ENCODE measurements at regions of chr7 and their contacts with region 1.

Region 1: GRCh38 chr7:116443101-116443523 is 56.4 kb upstream of the CAV2 start:
- DNase-seq: peak; percentile 91
- H3K4me3 ChIP-seq: no peak overlapping the region
- H3K27ac ChIP-seq: peak overlapping the region; percentile 93
- H3K4me1 ChIP-seq: peaks cover 35% of the 10 kb centered on the region
- H3K27me3 ChIP-seq: no peaks in the 10 kb centered on the region
- CTCF ChIP-seq: no peak
- POLR2A ChIP-seq: peak; percentile 50

Region 2: GRCh38 chr7:116024826-116025809 is 418.0 kb before region 1 on chr7:
- CTCF ChIA-PET with region 1: no interaction called
- POLR2A ChIA-PET with region 1: no interaction called
- dilution Hi-C with region 1: no loop called
- intact Hi-C with region 1: no loop called
- DNase-seq: peak; percentile 66
- H3K4me3 ChIP-seq: no peak overlapping the region
- H3K27ac ChIP-seq: peak overlapping the region; percentile 58
- H3K4me1 ChIP-seq: peaks cover 12% of the 10 kb centered on the region
- H3K27me3 ChIP-seq: no peaks in the 10 kb centered on the region
- CTCF ChIP-seq: no peak
- POLR2A ChIP-seq: no peak

Region 3: GRCh38 chr7:116087291-116087690 is 355.8 kb before region 1 on chr7:
- CTCF ChIA-PET with region 1: no interaction called
- POLR2A ChIA-PET with region 1: no interaction called
- dilution Hi-C with region 1: no loop called
- intact Hi-C with region 1: no loop called
- DNase-seq: no peak
- H3K4me3 ChIP-seq: no peak overlapping the region
- H3K27ac ChIP-seq: no peak overlapping the region
- H3K4me1 ChIP-seq: no peaks in the 10 kb centered on the region
- H3K27me3 ChIP-seq: no peaks in the 10 kb centered on the region
- CTCF ChIP-seq: no peak
- POLR2A ChIP-seq: no peak

Region 4: DNA sequence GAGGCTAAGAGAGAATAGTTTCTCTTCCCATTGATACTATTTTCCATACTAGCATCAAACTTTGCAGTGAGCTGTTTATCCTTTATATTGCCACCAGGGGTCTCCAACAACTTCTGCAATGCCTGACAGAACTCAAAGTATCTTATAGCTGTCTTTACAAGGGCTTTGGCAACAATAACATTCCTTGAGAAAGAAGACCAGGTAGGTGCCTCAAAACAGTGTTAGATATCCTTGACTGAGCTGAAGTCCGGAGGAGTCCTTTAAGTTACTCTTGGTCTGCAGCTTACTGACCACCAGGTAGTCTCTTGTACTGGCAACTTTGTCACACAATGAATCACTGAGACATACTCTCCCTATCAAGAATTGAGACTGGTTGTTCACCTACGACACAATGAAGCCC is 262.8 kb before region 1 on chr7:
- CTCF ChIA-PET with region 1: no interaction called
- POLR2A ChIA-PET with region 1: no interaction called
- dilution Hi-C with region 1: no loop called
- intact Hi-C with region 1: no loop called
- DNase-seq: peak; percentile 70
- H3K4me3 ChIP-seq: no peak overlapping the region
- H3K27ac ChIP-seq: no peak overlapping the region
- H3K4me1 ChIP-seq: no peaks in the 10 kb centered on the region
- H3K27me3 ChIP-seq: no peaks in the 10 kb centered on the region
- CTCF ChIP-seq: peak; percentile 53 to 63
- POLR2A ChIP-seq: no peak

Region 5: DNA sequence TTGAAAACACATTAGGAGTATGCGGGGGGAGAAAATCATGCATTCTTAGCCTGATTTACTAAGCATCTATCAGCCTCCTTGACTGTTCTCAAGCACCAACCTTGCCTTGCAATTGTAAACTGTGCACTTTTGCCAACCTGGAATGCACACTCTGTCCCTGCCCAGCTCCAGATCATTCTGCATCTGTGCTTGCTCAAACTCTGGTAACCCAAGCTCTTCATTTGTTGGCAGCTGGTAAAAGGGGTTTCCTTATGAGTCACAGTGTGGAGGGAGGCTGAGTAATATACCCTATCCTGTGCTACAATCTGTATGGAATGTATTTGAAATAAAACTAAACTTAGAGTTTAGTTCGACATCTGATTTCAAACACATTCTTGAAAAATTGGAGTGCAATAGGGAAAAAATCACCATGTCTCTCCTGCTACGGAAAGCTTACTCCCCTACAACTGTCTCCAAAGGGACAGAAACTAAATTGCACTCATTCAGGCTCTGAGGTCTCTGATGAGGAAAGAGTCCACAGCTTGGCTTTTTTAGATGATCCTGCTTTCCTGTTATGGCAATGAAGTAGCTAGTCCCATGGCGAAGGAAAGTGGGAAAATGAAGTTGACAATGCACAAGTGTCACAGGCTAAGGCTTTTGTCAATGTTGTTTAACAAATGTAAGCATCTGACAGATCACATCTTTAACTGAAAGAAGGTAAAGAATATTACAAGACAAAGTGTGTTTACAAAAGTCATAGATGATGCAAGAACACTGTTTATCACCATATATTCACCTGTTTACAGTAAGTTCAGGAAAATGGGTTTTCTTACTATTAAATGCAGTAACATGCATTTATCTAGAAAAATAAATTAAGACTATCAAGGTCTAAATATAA is 170.9 kb before region 1 on chr7:
- CTCF ChIA-PET with region 1: interaction called, 3 read pairs
- POLR2A ChIA-PET with region 1: no interaction called
- dilution Hi-C with region 1: no loop called
- intact Hi-C with region 1: loop called (anchors 5 kb)
- DNase-seq: peak; percentile 94
- H3K4me3 ChIP-seq: peak overlapping the region in 1 of 3 experiments; percentile 48
- H3K27ac ChIP-seq: peak overlapping the region; percentile 90
- H3K4me1 ChIP-seq: peaks cover 57% of the 10 kb centered on the region
- H3K27me3 ChIP-seq: no peaks in the 10 kb centered on the region
- CTCF ChIP-seq: no peak
- POLR2A ChIP-seq: no peak

Region 6: DNA sequence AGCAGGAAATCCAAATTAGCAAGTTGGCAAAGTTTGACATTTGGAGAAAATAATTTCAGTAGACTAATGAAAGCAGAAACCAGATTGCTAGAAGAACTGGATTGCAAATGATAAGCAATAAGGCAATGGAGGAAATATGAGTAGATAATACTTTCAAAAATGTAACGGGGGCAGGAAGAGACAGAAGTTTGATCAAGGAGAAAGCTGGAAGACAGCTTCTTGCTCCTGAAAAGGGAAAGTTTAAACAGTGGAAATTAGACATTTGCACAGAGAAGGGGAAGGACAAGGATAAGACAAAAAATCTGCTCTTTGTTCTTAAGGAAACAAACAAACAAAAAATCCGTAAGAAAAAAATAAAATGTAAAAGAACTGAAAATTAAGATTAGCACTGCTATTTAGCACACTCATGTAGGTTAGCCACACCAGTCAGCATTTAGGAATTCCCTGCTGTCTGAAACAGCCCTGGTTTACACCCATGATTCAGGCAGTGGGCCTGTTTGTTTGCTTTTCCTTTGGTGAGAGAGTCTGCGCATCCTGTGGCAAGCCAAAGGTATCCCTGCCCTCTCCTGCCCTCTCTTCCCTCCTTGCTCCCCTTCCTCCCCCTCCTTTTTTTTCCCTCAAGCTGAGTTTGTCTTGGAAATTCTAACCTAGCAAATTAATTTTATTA is 47.9 kb before region 1 on chr7:
- CTCF ChIA-PET with region 1: interaction called, 3 read pairs
- POLR2A ChIA-PET with region 1: interaction called, 3 read pairs
- dilution Hi-C with region 1: no loop called
- intact Hi-C with region 1: loop called (anchors 1 kb)
- DNase-seq: peak; percentile 88
- H3K4me3 ChIP-seq: no peak overlapping the region
- H3K27ac ChIP-seq: peak overlapping the region; percentile 85
- H3K4me1 ChIP-seq: peaks cover 38% of the 10 kb centered on the region
- H3K27me3 ChIP-seq: no peaks in the 10 kb centered on the region
- CTCF ChIP-seq: no peak
- POLR2A ChIP-seq: no peak

Region 7: GRCh38 chr7:116461500-116461899 is 18.4 kb after region 1 on chr7:
- CTCF ChIA-PET with region 1: interaction called, 7 read pairs
- POLR2A ChIA-PET with region 1: no interaction called
- dilution Hi-C with region 1: no loop called
- intact Hi-C with region 1: loop called (anchors 1 kb)
- DNase-seq: no peak
- H3K4me3 ChIP-seq: no peak overlapping the region
- H3K27ac ChIP-seq: no peak overlapping the region
- H3K4me1 ChIP-seq: peaks cover 15% of the 10 kb centered on the region
- H3K27me3 ChIP-seq: no peaks in the 10 kb centered on the region
- CTCF ChIP-seq: peak in 1 of 2 donors; percentile 11
- POLR2A ChIP-seq: no peak

Region 8: DNA sequence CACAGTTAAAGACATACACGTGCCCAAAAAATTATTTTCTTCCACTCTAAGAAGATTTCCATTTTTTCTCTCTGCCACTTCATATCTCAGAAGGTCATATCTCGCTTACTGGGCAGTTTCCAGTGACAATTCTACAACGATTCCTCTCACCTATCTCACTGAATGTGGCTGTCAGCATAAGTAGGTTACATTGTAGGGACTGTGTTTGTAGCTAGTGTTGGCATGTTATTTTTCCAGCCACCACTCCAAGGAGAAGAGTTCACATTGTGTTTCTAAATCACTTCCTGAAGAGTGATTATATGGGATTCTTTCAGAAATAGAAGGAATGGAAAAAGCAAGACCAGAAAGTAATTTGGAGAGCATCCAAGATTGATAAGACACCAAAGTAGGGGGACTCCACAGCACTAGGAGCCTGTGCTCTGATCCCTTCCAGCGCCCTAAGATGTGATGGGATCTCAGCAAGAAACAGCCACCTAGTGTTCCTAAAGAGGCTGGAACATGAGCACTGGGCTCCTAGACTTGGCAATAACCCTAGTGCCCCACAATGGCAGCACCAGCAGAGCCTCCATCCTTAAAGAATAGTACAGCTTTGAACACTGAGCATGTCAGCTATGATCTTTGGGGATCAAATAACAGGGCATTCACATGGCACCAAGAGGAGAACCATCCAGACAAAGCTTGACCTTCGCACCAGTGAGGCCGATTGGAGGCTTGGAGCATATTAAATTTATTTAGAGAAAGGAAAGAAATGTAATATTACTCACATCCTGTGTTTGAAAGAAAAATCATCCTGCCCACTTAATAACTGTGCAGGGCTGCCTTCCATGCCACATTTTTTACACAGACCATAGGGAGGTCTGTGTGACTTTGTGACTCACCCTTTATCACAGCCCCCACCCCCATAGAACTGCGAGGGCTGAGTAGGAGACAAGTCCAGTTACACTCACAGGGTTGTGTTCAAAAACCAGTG is 133.5 kb after region 1 on chr7:
- CTCF ChIA-PET with region 1: no interaction called
- POLR2A ChIA-PET with region 1: no interaction called
- dilution Hi-C with region 1: no loop called
- intact Hi-C with region 1: loop called (anchors 2 kb)
- DNase-seq: peak; percentile 98
- H3K4me3 ChIP-seq: peak overlapping the region in 1 of 3 experiments; percentile 10
- H3K27ac ChIP-seq: peak overlapping the region; percentile 95
- H3K4me1 ChIP-seq: peaks cover 51% of the 10 kb centered on the region
- H3K27me3 ChIP-seq: no peaks in the 10 kb centered on the region
- CTCF ChIP-seq: no peak
- POLR2A ChIP-seq: peak; percentile 45

Measured in endothelial cell of umbilical vein (primary cell).